Activated T-helper 2 cell treated with anti-CD3 and anti-CD28 coated beads, Interferon-gamma antibody, Interleukin-2, Interleukin-4, amounts not matched to agents 10 μg/mL and 5 μg/mL and 100 μg/mL, durations not matched to agents 14 hours and 24 hours and 36 hours (primary cell): ENCODE measurements at regions of chr9 and their contacts with region 1.

Region 1: GRCh38 chr9:5909976-5910375 is 19.3 kb downstream of the MLANA start:
- DNase-seq: no peak
- H3K4me3 Mint-ChIP-seq: no peak overlapping the region
- H3K27ac Mint-ChIP-seq: peak overlapping the region; percentile 59
- H3K4me1 Mint-ChIP-seq: peaks cover 18% of the 10 kb centered on the region
- H3K27me3 Mint-ChIP-seq: no peaks in the 10 kb centered on the region

Region 2: DNA sequence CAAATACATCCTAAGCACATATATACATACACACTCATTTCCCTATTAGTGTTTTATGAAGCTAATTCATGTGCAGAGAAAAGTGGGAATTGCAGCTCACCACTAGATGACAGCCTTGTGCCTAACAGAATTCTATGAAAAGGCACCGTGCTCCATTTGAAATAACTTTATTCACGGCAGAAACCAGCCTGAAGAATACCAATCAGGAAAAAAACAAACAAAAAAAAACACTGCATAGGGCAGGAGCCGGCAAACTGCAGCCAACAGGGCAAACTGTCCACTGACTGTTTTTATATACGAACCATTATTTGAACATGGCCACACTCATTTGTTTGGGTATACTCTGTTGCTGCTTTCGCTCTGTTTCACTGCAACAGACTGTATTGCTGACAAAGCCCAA is 110.7 kb before region 1 on chr9:
- intact Hi-C with region 1: no loop called
- DNase-seq: no peak
- H3K4me3 Mint-ChIP-seq: no peak overlapping the region
- H3K27ac Mint-ChIP-seq: peak overlapping the region; percentile 46
- H3K4me1 Mint-ChIP-seq: peaks cover 39% of the 10 kb centered on the region
- H3K27me3 Mint-ChIP-seq: no peaks in the 10 kb centered on the region

Region 3: GRCh38 chr9:5879419-5880181 is 30.4 kb before region 1 on chr9:
- intact Hi-C with region 1: no loop called
- DNase-seq: no peak
- H3K4me3 Mint-ChIP-seq: no peak overlapping the region
- H3K27ac Mint-ChIP-seq: no peak overlapping the region
- H3K4me1 Mint-ChIP-seq: peaks cover 28% of the 10 kb centered on the region
- H3K27me3 Mint-ChIP-seq: no peaks in the 10 kb centered on the region

Region 4: GRCh38 chr9:6015278-6016157 is 105.5 kb after region 1 on chr9 and contains the start of gene RANBP6:
- intact Hi-C with region 1: loop called (anchors 2 kb)
- DNase-seq: peak; percentile 87
- H3K4me3 Mint-ChIP-seq: peak within 1 kb of the TSS; percentile 93
- H3K27ac Mint-ChIP-seq: peak within 1 kb of the TSS; percentile 97
- H3K4me1 Mint-ChIP-seq: peaks cover 33% of the 10 kb centered on the region
- H3K27me3 Mint-ChIP-seq: no peaks in the 10 kb centered on the region
- total RNA-seq, gene RANBP6: 20.1 and 21.1 TPM in 2 replicates